Right cardiac atrium (tissue), 5 donors: ENCODE measurements at regions of chr15 and their contacts with region 1.

Region 1: GRCh38 chr15:61459785-61460707 is 230.9 kb upstream of the RORA start:
- DNase-seq: no peak
- ATAC-seq: peak in 1 of 2 donors; percentile 96
- H3K4me3 ChIP-seq: no peak overlapping the region
- H3K27ac ChIP-seq: no peak overlapping the region
- H3K4me1 ChIP-seq: no peaks in the 10 kb centered on the region
- H3K27me3 ChIP-seq: no peaks in the 10 kb centered on the region

Region 2: DNA sequence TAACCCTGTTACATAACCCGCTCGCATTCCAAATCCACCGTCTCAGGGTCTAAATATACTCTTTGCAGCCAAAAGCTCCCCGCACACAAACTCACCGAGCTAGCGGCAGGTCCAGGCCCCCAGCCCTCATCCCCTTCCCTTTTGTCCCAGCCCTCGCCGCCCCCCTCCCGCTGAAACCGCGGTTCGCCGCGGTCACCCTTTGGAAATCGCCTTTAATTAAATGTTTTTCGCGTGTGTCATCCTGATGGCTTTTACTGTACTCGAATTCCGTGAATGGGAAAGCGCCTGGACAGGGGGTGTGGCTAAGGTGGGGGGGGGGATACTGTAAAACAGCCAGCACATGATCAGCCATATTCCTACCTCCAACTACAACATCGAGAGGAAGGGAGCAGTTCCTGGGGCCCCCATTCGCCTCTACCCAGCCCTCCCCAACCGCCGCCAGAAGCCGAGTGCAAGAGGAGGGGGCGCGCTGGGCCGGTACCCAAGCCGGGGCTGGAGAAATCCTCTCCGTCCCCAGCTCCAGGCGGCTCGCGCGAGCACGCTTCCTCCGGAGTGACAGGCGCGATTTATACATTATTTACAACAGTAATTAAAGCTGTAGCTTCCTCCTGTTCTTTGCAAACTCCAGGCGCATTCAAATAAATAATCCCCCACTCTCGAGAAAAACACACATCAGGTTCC is 232.6 kb before region 1 on chr15:
- intact Hi-C with region 1: no loop called
- DNase-seq: peak in 2 of 3 donors; percentile 51 to 62
- ATAC-seq: peak; percentile 20 to 52
- H3K4me3 ChIP-seq: peak overlapping the region; percentile 99
- H3K27ac ChIP-seq: no peak overlapping the region
- H3K4me1 ChIP-seq: peaks cover 2% of the 10 kb centered on the region
- H3K27me3 ChIP-seq: no peaks in the 10 kb centered on the region

Region 3: DNA sequence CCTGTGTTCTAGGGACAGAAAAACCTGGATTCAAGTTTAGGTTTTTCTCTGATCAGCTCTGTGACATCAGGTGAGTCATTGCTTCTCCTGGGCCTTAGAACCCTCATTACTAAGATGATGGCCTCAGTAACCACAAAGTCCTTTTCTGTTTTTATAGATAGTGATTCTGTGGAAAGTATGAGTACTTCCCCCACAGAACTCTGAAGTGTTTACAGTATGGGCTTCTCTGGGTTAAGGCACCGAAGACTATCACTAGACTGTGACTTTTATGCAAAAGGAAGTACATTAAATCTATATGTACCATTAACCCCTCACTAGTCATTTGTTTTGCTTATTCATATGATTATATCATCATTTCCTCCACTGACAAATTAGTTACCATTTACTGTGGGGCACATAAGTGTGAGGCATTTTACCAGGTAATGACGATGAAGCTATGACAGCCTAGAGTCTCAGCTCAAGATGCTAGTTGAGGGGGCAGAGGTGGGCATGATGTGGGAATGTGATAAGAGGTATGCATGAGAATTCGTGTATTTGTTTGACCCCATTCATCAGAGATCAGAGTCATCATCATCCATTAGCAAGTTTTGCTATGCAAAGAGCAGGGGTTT is 216.0 kb before region 1 on chr15:
- intact Hi-C with region 1: no loop called
- DNase-seq: no peak
- ATAC-seq: no peak
- H3K4me3 ChIP-seq: no peak overlapping the region
- H3K27ac ChIP-seq: no peak overlapping the region
- H3K4me1 ChIP-seq: no peaks in the 10 kb centered on the region
- H3K27me3 ChIP-seq: no peaks in the 10 kb centered on the region

Region 4: DNA sequence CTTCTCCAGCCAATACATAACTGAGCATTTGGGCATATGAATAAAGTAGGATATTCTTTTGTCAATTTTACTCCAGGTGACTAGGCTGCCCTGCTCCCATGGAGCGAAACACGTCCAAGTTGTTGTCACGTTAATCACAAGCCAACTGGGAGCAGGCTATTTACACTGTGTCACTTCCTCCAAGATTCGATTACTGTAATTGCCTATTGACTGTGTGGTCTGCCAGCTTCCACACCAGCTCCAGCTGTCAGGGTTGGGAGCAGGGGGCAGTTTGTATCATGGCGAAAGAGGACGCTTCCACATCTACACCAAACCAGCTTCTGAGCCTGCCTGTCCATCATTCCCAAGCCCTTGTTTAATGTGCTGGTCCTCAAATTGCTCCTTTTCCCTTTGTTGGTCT is 141.7 kb before region 1 on chr15:
- intact Hi-C with region 1: no loop called
- DNase-seq: no peak
- ATAC-seq: no peak
- H3K4me3 ChIP-seq: no peak overlapping the region
- H3K27ac ChIP-seq: no peak overlapping the region
- H3K4me1 ChIP-seq: no peaks in the 10 kb centered on the region
- H3K27me3 ChIP-seq: no peaks in the 10 kb centered on the region

Region 5: DNA sequence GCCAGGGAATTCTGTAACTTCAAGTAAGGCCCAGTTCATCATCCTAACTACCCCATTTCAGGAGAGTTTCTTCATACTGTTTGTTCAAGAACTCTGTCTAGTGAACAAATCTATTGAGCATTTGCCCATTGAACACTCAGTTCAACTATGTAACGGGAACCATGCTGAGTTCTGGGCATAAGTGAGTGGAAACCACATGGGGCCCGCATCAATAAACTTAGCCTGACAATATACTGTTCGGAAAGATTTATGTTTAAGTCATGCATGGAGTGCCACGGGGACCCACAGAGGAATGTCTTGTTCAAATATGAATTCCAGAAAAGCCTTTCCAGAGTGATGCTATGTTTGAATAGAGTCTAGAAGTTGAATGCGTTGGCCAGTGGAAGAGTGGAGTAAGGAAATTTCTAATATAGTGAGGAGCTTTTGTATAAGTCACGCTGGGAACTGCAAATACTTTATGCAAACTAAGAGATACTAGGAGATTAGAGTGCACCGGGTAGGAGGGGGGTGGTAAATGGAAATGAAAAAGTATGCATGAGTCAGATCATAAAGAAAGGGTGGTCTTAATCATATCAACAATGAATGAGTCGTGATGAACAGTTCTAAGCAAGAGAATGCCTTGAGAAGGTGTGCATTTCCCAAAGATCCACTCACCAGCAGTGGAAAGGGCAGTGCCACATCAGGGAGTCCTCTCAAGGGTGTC is 320.4 kb after region 1 on chr15:
- intact Hi-C with region 1: loop called in 1 of 4 experiments (anchors 5 kb)
- DNase-seq: no peak
- ATAC-seq: no peak
- H3K4me3 ChIP-seq: no peak overlapping the region
- H3K27ac ChIP-seq: no peak overlapping the region
- H3K4me1 ChIP-seq: no peaks in the 10 kb centered on the region
- H3K27me3 ChIP-seq: peaks cover 6% of the 10 kb centered on the region

Region 6: DNA sequence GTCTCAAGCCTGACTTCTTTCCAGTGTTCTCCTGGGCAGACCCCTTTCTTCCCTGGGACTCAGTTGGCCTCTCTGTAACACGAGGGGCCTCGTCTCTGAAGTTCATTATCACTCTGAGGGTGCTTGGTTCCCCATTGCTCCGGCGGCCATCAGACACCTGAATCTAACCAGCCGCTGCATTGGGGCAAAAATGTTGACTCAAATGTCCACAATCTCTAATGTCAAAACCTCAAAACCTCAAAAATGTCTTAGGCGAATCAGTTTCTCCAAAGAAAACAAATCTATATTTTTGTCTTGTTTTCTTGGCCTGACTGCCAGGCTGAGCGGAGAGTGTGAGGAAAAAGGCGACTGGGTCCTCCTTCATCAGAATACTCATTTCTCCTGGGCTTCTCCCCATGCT is 379.5 kb after region 1 on chr15:
- intact Hi-C with region 1: no loop called
- DNase-seq: no peak
- ATAC-seq: no peak
- H3K4me3 ChIP-seq: no peak overlapping the region
- H3K27ac ChIP-seq: no peak overlapping the region
- H3K4me1 ChIP-seq: no peaks in the 10 kb centered on the region
- H3K27me3 ChIP-seq: no peaks in the 10 kb centered on the region